Activated CD4-positive, alpha-beta memory T cell treated with anti-CD3 and anti-CD28 coated beads, Interleukin-2, amount 10 ng/mL, durations not matched to agents 7 days and 5 days (primary cell): ENCODE measurements at regions of chr7 and their contacts with region 1.

Region 1: DNA sequence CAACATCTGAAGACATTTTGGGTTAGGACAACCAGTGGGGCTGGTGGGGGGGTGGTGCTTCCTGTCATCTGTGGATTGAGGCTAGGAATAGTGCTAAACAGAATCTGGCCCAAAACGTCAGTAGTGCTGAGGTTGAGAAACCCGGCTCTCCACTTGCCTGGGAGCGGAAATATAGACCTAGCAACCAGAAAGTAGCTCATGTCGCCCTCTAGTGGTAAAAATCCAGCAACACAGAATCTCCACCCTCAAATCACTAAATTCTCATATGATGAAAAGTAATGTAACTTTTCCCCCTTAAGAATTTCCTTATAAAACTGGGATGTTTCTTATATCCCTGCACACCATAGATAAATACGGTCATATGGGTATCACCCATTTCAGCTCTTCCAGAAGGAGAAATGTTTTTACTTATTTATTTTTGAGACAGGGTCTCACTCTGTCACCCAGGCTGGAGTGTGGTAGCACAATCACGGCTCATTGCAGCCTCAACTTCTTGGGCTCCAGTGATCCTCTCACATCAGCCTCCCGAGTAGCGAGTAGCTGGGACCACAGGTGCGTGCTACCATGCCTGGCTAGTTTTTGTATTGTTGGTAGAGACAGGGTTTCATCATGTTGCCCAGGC is 34.4 kb downstream of the ZC3HAV1 start:
- DNase-seq: peak; percentile 73
- H3K4me3 Mint-ChIP-seq: peak overlapping the region; percentile 36
- H3K27ac Mint-ChIP-seq: peak overlapping the region; percentile 58
- H3K4me1 Mint-ChIP-seq: peaks cover 74% of the 10 kb centered on the region
- H3K27me3 Mint-ChIP-seq: no peaks in the 10 kb centered on the region

Region 2: GRCh38 chr7:139016931-139017511 is 58.1 kb before region 1 on chr7:
- CTCF ChIA-PET with region 1: interaction called, 17 read pairs
- POLR2A ChIA-PET with region 1: interaction called, 9 read pairs
- DNase-seq: peak; percentile 74
- H3K4me3 Mint-ChIP-seq: no peak overlapping the region
- H3K27ac Mint-ChIP-seq: no peak overlapping the region
- H3K4me1 Mint-ChIP-seq: peaks cover 12% of the 10 kb centered on the region
- H3K27me3 Mint-ChIP-seq: peaks cover 21% of the 10 kb centered on the region

Region 3: GRCh38 chr7:139043823-139044812 is 31.0 kb before region 1 on chr7:
- CTCF ChIA-PET with region 1: interaction called, 17 read pairs
- POLR2A ChIA-PET with region 1: interaction called, 171 read pairs
- DNase-seq: peak; percentile 85
- H3K4me3 Mint-ChIP-seq: peak overlapping the region; percentile 58
- H3K27ac Mint-ChIP-seq: peak overlapping the region; percentile 80
- H3K4me1 Mint-ChIP-seq: peaks cover 78% of the 10 kb centered on the region
- H3K27me3 Mint-ChIP-seq: peaks cover 2% of the 10 kb centered on the region

Region 4: DNA sequence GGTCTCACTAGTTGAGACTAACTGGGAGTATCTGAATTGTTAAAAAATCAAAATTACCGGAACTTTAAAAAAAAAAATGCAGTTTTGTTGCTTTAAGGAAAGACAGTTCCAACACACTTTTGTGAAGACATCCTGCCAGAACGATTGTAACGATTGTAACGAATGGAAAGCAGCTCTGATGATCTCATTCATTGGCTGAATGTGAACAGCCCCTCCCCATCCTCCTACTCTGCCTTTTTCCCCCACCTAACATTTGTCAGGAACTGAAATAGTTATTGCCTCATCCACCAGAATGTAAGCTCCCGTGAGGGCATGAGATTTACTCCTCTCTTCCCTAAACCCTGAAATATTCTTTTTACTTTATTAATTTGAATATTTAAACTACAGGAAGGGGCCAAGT is 16.2 kb before region 1 on chr7:
- CTCF ChIA-PET with region 1: interaction called, 18 read pairs
- POLR2A ChIA-PET with region 1: interaction called, 171 read pairs
- DNase-seq: no peak
- H3K4me3 Mint-ChIP-seq: no peak overlapping the region
- H3K27ac Mint-ChIP-seq: peak overlapping the region; percentile 53
- H3K4me1 Mint-ChIP-seq: peaks cover 62% of the 10 kb centered on the region
- H3K27me3 Mint-ChIP-seq: no peaks in the 10 kb centered on the region

Region 5: DNA sequence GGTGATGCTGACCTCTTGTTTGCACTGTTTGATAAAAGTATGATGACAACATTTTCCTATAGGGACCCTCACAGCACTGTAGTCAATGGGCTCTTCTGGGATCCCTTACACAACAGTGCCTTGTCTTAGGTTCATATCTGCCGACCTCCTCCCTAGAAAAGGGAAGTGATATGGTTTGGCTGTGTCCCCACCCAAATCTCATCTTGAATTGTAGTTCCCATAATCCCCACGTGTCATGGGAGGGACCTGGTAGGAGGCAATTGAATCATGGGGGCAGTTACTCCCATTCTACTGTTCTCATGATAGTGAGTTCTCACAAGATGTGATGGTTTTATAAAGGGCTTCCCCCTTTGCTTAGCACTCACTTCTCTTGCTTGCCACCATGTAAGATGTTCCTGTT is 11.3 kb after region 1 on chr7:
- CTCF ChIA-PET with region 1: interaction called, 29 read pairs
- POLR2A ChIA-PET with region 1: interaction called, 10 read pairs
- DNase-seq: no peak
- H3K4me3 Mint-ChIP-seq: no peak overlapping the region
- H3K27ac Mint-ChIP-seq: peak overlapping the region; percentile 32
- H3K4me1 Mint-ChIP-seq: peaks cover 88% of the 10 kb centered on the region
- H3K27me3 Mint-ChIP-seq: no peaks in the 10 kb centered on the region

Region 6: DNA sequence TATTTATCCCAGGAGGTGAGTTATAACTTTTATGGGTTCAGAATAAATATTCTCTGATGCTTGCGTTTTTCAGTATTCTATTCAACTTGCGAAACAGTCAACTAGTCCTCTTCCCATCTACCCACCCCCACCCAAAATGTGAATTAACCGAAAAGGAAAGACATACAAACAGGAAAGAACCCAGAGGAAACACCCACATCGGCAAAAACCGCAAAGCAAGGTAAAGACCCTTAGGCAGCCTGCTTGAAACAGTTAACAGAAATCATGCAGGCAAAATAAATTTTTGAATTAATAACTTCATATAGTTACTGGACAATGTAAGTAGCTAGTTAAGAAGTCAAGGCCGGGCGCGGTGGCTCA is 28.9 kb after region 1 on chr7:
- CTCF ChIA-PET with region 1: interaction called, 12 read pairs
- POLR2A ChIA-PET with region 1: interaction called, 10 read pairs
- DNase-seq: peak; percentile 54
- H3K4me3 Mint-ChIP-seq: peak overlapping the region; percentile 92
- H3K27ac Mint-ChIP-seq: peak overlapping the region; percentile 90
- H3K4me1 Mint-ChIP-seq: peaks cover 24% of the 10 kb centered on the region
- H3K27me3 Mint-ChIP-seq: no peaks in the 10 kb centered on the region